Spleen (tissue), 13 donors: ENCODE measurements at regions of chr21 and their contacts with region 1.

Region 1: GRCh38 chr21:17682924-17683323 is 70.2 kb upstream of the BTG3 start:
- DNase-seq: no peak
- H3K4me3 ChIP-seq: no peak overlapping the region
- H3K27ac ChIP-seq: no peak overlapping the region
- H3K4me1 ChIP-seq: no peaks in the 10 kb centered on the region
- H3K27me3 ChIP-seq: no peaks in the 10 kb centered on the region
- CTCF ChIP-seq: no peak
- POLR2A ChIP-seq: no peak

Region 2: GRCh38 chr21:17903029-17903806 is 220.3 kb after region 1 on chr21:
- intact Hi-C with region 1: loop called (anchors 5 kb)
- DNase-seq: no peak
- H3K4me3 ChIP-seq: no peak overlapping the region
- H3K27ac ChIP-seq: no peak overlapping the region
- H3K4me1 ChIP-seq: peaks cover 0 to 5% (median 0%) of the 10 kb centered on the region in 6 donors
- H3K27me3 ChIP-seq: no peaks in the 10 kb centered on the region
- CTCF ChIP-seq: peak in 8 of 11 experiments; percentile 15 to 40 (median 24)
- POLR2A ChIP-seq: no peak